ENCODE measurements at regions of chr3 and their contacts with region 1.

Region 1: GRCh38 chr3:36700537-36701248 is 63.7 kb downstream of the DCLK3 start:
- ATAC-seq: peak; percentile 87 to 99 (median 97)
- H3K4me3 ChIP-seq: no peak overlapping the region
- H3K27ac ChIP-seq: no peak overlapping the region
- H3K4me1 ChIP-seq: peaks cover 0 to 6% of the 10 kb centered on the region in 2 donors

Region 2: GRCh38 chr3:35965908-35966307 is 734.8 kb before region 1 on chr3:
- in situ Hi-C with region 1: loop called (anchors 10 to 25 kb)
- ATAC-seq: peak; percentile 60 to 93 (median 80)
- H3K4me3 ChIP-seq: no peak overlapping the region
- H3K27ac ChIP-seq: no peak overlapping the region
- H3K4me1 ChIP-seq: no peaks in the 10 kb centered on the region

Region 3: DNA sequence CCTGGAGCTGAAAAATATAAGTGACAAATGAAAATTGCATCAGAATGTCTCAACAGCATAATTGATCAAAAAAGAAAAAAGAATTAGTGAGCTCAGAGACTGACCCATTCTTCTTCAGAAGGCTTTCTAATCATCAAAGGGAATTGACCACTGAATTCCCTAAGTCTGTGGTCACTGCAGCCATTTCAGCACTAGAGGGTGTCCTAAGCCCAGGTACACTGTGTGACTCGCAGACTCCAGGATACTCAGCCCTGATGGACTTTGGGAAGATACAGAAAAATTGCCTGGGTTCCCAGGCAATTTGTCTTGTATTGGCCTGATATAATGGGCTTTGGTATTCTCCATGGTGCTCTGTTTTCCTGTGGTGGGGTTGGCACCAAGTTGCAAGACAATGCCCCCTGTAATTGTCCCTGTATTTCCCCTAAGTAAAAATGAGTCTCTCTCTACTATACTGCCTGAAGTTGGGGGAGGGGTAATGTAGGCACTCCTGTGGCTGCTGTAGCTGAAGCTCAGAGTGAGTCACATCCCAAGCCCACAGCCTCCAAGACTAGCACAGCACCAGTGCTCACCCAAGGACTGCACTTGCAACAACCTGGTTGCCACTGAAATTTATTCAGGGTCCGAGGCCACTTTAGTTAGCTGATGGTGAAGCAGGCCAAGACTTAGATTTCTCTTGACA is 576.4 kb before region 1 on chr3:
- in situ Hi-C with region 1: loop called in 1 of 9 experiments (anchors 10 kb)
- ATAC-seq: peak in 3 of 8 experiments; percentile 92 to 94 (median 93)
- H3K4me3 ChIP-seq: no peak overlapping the region
- H3K27ac ChIP-seq: no peak overlapping the region
- H3K4me1 ChIP-seq: no peaks in the 10 kb centered on the region

Region 4: GRCh38 chr3:36416599-36416998 is 284.1 kb before region 1 on chr3:
- in situ Hi-C with region 1: no loop called
- ATAC-seq: peak in 3 of 8 experiments; percentile 28 to 71 (median 56)
- H3K4me3 ChIP-seq: no peak overlapping the region
- H3K27ac ChIP-seq: no peak overlapping the region
- H3K4me1 ChIP-seq: no peaks in the 10 kb centered on the region

Region 5: DNA sequence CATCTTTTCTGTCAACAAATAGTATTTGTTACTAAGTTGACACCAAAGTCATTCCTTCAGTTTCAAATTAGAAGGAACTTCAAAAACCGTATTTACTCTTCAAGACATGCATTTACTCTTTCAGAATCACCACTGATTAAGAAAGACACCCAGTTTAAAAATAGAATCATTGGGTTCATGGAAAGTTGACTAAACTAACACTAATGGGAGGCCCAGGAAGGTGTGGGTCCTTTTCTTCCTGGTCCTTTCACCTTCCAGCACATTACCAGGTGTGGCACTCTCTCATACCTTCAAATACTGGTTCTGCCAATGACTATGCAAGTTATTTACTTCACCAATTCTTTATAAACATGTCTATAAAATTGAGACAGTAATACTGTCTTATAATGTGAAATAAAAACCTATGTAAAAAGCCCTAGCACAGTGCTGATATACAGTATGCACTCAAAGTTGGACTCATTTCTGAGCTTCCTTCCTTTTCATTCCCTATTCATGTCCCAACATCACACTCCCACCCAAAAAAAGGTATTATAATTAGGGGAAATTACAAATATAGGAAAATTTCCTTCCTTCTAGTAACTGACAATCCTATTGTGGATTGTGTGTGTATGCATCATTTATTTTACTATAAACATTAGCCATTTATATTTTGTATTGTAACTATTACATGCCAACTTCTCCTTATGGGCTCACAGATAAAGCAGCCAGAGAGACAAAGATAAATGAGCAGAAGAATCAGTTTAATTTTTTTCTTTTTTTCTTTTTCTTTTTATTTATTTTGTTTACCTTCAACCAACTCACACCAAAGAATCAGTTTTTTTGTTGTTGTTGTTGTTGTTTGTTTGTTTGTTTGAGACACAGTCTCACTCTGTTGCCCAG is 424.7 kb after region 1 on chr3:
- in situ Hi-C with region 1: no loop called
- ATAC-seq: peak in 1 of 8 experiments; percentile 73
- H3K4me3 ChIP-seq: no peak overlapping the region
- H3K27ac ChIP-seq: no peak overlapping the region
- H3K4me1 ChIP-seq: no peaks in the 10 kb centered on the region